ENCODE measurements at regions of chrX and their contacts with region 1.

Region 1: DNA sequence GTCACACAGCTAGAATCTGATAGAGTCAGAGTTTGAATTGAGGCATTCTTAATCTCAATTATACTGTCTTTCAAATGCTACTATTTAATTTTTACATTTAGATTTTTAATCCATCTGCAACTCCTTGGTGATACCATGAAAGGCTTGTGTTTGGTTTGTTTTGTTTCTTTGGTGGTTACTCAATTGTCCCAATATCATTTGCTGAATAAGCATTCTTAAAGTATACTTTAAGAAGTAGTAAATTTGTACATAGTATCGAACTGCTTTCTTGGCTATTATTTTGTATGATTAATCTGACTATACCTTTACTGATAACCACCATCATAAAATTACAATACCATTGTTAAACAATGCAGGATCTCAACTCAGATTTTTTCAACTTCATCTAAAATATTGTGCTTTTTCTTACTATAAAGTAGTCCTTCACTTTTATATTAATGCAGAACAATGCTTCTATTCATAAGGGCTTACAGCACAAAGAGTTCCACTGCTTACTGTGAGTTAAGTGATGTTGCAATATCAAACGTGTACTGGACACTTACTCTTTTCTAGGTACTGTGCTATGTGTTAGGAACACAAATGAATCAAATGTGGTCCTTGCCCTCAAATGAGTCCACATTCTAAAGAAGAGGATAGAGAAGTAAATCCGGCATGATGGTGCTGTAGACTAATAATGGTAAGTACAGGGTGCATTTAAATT is 111.2 kb upstream of the GRIA3 start:
- DNase-seq: peak; percentile 44
- ATAC-seq: peak; percentile 40; the same call in 1 of the 3 replicates
- H3K4me3 ChIP-seq: no peak overlapping the region
- H3K27ac ChIP-seq: no peak overlapping the region
- H3K4me1 ChIP-seq: 0 out of 2 replicates have a peak, but pooled peaks cover 10% of the 10 kb centered on the region
- H3K27me3 ChIP-seq: no peaks in the 10 kb centered on the region
- CTCF ChIP-seq: no peak
- EP300 ChIP-seq: no peak
- POLR2A ChIP-seq: no peak
- RAD21 ChIP-seq: no peak

Region 2: GRCh38 chrX:123036401-123036800 is 36.4 kb before region 1 on chrX:
- CTCF ChIA-PET with region 1: no interaction called
- POLR2A ChIA-PET with region 1: no interaction called
- in situ Hi-C with region 1: no loop called
- intact Hi-C with region 1: no loop called
- DNase-seq: no peak
- ATAC-seq: no peak
- H3K4me3 ChIP-seq: no peak overlapping the region
- H3K27ac ChIP-seq: no peak overlapping the region
- H3K4me1 ChIP-seq: no peaks in the 10 kb centered on the region
- H3K27me3 ChIP-seq: no peaks in the 10 kb centered on the region; a peak in 1 of 5 replicates
- CTCF ChIP-seq: no peak
- EP300 ChIP-seq: no peak
- POLR2A ChIP-seq: no peak
- RAD21 ChIP-seq: no peak

Region 3: DNA sequence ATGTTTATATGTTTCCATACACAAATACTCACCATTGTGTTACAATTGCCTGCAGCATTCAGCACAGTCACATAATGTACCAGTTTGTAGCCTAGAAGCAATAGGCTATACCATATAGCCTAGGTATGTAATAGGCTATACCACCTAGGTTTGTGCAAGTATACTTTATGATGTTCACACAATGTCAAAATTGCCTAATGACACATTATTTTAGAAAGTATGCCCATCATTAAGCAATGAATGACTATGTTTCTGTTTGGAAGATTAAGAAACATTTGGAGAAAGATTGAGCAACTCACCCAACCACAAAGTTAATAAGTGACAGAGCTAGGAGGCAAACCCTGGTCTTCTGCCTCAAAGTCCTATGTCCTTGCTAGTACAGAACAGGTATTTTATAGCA is 14.5 kb after region 1 on chrX:
- CTCF ChIA-PET with region 1: no interaction called
- POLR2A ChIA-PET with region 1: no interaction called
- in situ Hi-C with region 1: no loop called
- intact Hi-C with region 1: loop called (anchors 1 kb)
- DNase-seq: peak; percentile 81
- ATAC-seq: peak; percentile 86
- H3K4me3 ChIP-seq: no peak overlapping the region; a peak in 1 of 6 replicates
- H3K27ac ChIP-seq: peak overlapping the region; percentile 43
- H3K4me1 ChIP-seq: peaks cover 53% of the 10 kb centered on the region
- H3K27me3 ChIP-seq: no peaks in the 10 kb centered on the region
- CTCF ChIP-seq: no peak
- EP300 ChIP-seq: peak in 1 of 2 experiments; percentile 75; a peak in 2 of 4 replicates
- POLR2A ChIP-seq: no peak
- RAD21 ChIP-seq: no peak